Adrenal gland (tissue), 19 donors: ENCODE measurements at regions of chr7 and their contacts with region 1.

Region 1: GRCh38 chr7:137656227-137656849 is 190.4 kb downstream of the DGKI start:
- DNase-seq: peak; percentile 71 to 95 (median 88)
- H3K4me3 ChIP-seq: no peak overlapping the region
- H3K27ac ChIP-seq: no peak overlapping the region
- H3K4me1 ChIP-seq: no peaks in the 10 kb centered on the region
- H3K27me3 ChIP-seq: no peaks in the 10 kb centered on the region
- CTCF ChIP-seq: peak; percentile 62 to 88 (median 78)
- POLR2A ChIP-seq: no peak

Region 2: GRCh38 chr7:138002096-138002827 is 345.9 kb after region 1 on chr7:
- intact Hi-C with region 1: loop called (anchors 5 to 10 kb)
- DNase-seq: peak; percentile 99 to 100 (median 100)
- H3K4me3 ChIP-seq: peak overlapping the region; percentile 51 to 89 (median 73)
- H3K27ac ChIP-seq: peak overlapping the region; percentile 57 to 95 (median 91)
- H3K4me1 ChIP-seq: peaks cover 16 to 26% of the 10 kb centered on the region in 2 donors
- H3K27me3 ChIP-seq: no peaks in the 10 kb centered on the region
- CTCF ChIP-seq: peak; percentile 83 to 93 (median 90)
- POLR2A ChIP-seq: no peak

Region 3: DNA sequence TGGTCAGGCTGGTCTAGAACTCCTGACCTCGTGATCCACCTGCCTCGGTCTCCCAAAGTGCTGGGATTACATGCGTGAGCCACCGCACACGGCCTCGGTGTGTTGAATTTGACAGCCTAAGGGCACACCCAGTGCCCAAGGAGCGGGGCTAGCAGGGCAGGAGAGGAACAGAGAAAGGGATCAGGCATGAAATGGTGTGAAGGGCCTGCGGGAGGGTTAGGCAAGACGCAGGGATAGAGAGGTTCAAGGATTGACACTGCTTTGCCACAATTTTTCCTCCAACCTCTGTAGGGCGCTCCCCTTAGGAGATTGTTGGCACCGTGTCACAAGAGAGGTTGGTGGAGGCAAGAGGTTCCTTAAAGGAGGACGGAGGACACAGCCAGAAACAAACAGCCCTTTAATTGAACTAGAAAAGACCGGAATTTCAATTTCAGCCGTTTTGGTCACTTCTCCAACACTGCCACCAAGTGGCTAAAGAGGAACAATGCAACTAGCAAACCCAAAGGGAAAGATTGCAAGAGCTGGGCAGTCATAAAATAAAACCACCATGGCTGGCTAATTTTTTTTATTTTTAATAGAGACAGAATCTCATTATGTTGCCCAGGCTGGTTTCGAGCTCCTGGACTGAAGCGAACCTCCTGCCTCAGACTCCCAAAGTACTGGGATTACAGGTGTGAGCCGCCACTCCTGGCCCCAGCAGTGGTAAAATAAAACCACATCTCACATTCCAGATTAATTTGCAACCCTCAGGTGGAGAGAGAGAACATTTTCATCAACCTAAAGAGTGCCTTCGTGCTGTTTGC is 352.4 kb after region 1 on chr7:
- intact Hi-C with region 1: loop called (anchors 5 to 10 kb)
- DNase-seq: peak in 2 of 7 donors; percentile 44 to 56
- H3K4me3 ChIP-seq: no peak overlapping the region
- H3K27ac ChIP-seq: peak overlapping the region in 1 of 5 donors; percentile 7
- H3K4me1 ChIP-seq: no peaks in the 10 kb centered on the region
- H3K27me3 ChIP-seq: no peaks in the 10 kb centered on the region
- CTCF ChIP-seq: peak; percentile 86 to 96 (median 90)
- POLR2A ChIP-seq: no peak